Astrocyte of the cerebellum (primary cell): ENCODE measurements at regions of chr17 and their contacts with region 1.

Region 1: GRCh38 chr17:56715613-56716357 is 117.9 kb downstream of the C17orf67 start:
- DNase-seq: peak; percentile 75
- H3K4me3 ChIP-seq: no peak overlapping the region
- CTCF ChIP-seq: peak; percentile 77

Region 2: GRCh38 chr17:55996825-55997224 is 719.0 kb before region 1 on chr17:
- in situ Hi-C with region 1: loop called (anchors 10 kb)
- DNase-seq: no peak
- H3K4me3 ChIP-seq: no peak overlapping the region
- CTCF ChIP-seq: no peak

Region 3: DNA sequence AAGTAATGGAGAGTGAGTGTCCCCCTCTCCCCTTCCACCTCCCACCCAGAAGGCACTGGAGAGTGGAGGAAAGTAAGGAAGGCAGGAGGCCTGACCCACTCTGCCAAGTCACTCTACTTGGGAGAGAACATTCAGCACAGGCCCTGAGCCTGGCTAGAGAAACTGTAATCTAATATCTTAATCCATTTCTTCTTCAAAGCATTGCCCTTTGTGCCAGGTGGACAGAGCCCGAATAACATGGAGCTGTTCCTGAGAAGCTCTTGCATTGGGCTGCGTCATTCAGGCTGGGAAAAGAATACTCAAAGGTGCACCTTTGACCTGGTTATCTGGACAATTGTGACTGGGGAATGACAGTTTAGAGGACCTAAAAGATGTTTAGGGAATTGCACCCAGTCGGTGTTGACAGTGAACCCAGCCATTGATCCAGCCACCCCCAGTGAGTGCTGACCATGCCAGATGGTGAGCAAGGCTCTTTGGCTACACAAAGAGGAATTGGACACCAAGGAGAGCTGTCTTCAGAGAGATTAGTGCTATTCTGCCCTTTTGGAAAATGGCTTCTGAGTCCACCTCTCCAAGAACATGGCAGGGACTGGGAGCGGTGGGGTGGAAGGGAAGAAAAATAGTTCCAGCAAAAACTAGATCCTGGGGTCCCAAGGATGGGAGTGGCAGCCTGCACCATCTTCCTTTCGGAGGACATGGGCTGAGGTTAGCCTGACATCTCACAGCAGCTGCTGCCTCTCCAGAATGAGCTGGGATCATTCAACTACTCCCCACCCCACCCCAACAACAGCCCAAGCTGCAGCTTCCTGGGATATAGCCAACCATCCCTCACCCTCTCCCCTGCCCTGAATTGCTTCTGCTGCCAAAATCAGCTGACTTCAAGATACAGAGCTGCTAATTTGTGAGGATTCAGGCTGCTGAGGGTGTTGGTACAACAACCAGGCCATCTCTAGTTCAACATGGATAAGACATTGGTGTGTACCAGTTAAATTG is 133.9 kb before region 1 on chr17:
- in situ Hi-C with region 1: loop called (anchors 5 kb)
- DNase-seq: no peak
- H3K4me3 ChIP-seq: no peak overlapping the region
- CTCF ChIP-seq: no peak

Region 4: DNA sequence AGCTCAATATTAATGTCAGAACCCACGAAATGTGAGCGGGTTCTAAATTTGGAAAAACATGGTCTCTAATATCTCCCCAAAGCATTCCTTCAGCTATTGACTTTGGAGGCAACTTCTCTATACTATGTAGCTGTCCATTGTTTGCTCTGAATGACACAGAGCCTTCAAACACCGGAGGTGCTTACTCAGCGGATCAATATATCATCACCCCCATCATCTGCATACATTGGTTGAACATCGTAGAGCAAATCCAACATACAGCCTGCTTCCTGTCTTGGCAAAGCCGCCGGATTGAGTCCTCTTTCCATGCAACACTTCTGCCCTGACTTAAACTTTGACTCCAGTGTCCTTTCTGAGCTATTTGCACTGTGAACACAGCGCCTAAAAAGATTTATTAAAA is 56.7 kb after region 1 on chr17:
- in situ Hi-C with region 1: no loop called
- DNase-seq: no peak
- H3K4me3 ChIP-seq: no peak overlapping the region
- CTCF ChIP-seq: no peak